ENCODE measurements at regions of chr14 and their contacts with region 1.

Region 1: GRCh38 chr14:102086972-102087761 is at the start of gene HSP90AA1:
- DNase-seq: peak; percentile 88 to 100
- H3K4me3 ChIP-seq: peak within 1 kb of the TSS; percentile 89
- H3K27ac ChIP-seq: peak within 1 kb of the TSS; percentile 82
- H3K4me1 ChIP-seq: peaks cover 41% of the 10 kb centered on the region
- H3K27me3 ChIP-seq: no peaks in the 10 kb centered on the region
- CTCF ChIP-seq: peak; percentile 28; the same call in 1 of the 2 replicates
- total RNA-seq, gene HSP90AA1: 1,314 and 1,931 TPM in 2 replicates

Region 2: GRCh38 chr14:101797856-101798255 is 289.3 kb before region 1 on chr14:
- CTCF ChIA-PET with region 1: interaction called, 11 read pairs
- POLR2A ChIA-PET with region 1: no interaction called
- intact Hi-C with region 1: no loop called
- DNase-seq: no peak
- H3K4me3 ChIP-seq: no peak overlapping the region
- H3K27ac ChIP-seq: no peak overlapping the region
- H3K4me1 ChIP-seq: no peaks in the 10 kb centered on the region
- H3K27me3 ChIP-seq: no peaks in the 10 kb centered on the region
- CTCF ChIP-seq: no peak

Region 3: DNA sequence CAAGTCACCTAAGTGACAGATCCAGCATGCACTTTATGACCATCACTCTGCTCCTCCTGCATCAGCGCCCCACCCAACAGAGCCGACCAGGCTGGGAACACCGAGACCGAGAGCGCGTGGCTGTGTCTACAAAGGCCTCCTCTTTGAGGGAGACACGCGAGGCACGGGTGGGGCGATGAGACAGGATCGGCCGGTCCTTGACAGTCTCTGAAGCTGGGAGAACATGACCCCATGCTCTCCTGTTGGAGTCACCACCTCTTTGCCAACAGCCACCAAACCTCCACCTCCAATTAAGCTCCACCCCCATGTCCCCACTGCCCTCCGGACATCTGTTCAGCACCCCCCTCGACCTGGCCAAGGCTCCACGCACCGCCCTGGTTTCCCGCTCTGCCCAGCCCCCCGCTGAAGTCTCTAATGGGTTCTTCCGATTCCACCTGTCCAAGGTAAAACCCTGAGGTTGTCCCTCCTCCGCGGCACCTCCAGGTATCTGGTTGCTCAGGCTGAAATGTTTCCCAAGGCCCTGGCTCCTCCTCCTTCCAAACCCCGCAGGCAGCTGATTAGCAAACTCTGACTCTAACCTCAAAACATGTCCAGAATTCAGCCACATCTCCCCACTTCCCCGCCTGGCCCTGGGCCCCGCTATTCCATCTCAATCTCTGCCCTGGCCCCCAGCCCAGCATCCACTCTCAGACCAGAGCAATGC is 31.8 kb before region 1 on chr14:
- CTCF ChIA-PET with region 1: no interaction called
- POLR2A ChIA-PET with region 1: interaction called, 6 read pairs
- intact Hi-C with region 1: loop called (anchors 2 kb)
- DNase-seq: peak; percentile 92 to 98
- H3K4me3 ChIP-seq: peak overlapping the region; percentile 43
- H3K27ac ChIP-seq: peak overlapping the region; percentile 48
- H3K4me1 ChIP-seq: peaks cover 36% of the 10 kb centered on the region
- H3K27me3 ChIP-seq: no peaks in the 10 kb centered on the region
- CTCF ChIP-seq: no peak

Region 4: DNA sequence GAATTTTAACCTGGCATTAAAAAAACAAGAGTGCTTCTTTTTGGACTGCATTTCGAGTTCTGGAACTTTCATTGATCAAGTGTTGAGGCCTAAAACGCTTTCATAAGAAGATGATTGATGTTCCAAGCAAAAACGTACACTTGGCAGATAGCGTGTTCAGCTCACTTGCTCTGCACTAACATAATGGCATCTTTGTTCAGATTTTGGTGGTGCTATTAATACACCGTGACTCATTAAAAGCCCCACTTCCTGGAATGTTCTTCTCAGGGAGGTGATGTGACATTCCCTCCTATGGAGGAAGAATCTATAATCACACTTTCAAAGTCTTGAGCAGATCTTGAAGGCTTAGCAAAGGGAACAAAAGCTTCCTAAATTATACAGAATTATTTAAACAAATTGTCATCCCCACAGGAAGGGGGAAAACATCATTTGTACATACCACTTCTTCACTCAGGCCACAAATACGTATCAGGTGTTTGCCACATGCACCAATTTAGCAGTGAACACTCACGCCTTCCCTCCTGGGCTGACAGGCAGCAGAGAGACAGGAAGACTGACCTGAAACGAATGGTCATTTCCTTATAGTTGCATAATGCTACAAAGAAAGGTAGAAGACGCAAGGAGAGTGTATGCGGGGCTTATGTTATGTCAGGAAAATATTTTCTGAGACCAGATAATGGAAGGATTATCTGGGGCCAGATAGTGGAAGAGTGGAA is 15.7 kb before region 1 on chr14:
- CTCF ChIA-PET with region 1: interaction called, 8 read pairs
- POLR2A ChIA-PET with region 1: interaction called, 26 read pairs
- intact Hi-C with region 1: loop called (anchors 1 kb)
- DNase-seq: peak; percentile 66 to 100
- H3K4me3 ChIP-seq: peak overlapping the region; percentile 7; the same call in 1 of the 2 replicates
- H3K27ac ChIP-seq: peak overlapping the region; percentile 91
- H3K4me1 ChIP-seq: peaks cover 34% of the 10 kb centered on the region
- H3K27me3 ChIP-seq: no peaks in the 10 kb centered on the region
- CTCF ChIP-seq: 0 out of 2 replicates have a peak, but pooled peaks have one; percentile 28

Region 5: DNA sequence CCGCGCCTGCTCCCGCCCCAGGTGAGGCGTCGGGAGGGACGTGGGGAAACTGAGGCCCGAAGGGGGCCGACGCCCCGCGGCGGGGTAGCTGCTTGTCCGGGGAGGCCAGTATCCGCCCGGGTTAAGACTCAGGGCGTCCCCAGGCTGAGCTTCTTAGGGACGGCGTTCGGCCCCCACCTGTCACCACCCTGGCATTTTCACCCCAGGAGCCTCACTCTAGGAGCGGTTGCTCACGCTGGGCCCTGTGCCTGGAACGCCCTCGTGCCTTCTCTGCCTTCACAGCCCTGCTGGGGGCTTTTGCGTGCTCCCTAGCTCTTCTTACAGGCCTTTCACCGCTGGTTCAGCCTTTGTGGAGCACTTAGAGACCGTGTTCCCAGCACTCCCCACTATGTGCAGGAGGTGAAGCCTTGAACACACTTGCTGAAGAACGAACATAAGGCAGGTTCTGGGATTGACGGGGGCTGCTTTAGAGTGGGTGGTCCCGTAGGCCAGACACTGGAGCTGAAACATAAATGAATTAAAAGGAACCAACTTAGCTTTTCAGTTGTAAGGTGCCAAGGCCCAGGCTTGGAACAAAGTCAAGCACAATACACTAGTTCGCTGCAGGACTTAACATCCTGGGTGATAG is 233.0 kb after region 1 on chr14:
- CTCF ChIA-PET with region 1: no interaction called
- POLR2A ChIA-PET with region 1: no interaction called
- intact Hi-C with region 1: no loop called
- DNase-seq: peak; percentile 17 to 46
- H3K4me3 ChIP-seq: peak overlapping the region; percentile 69
- H3K27ac ChIP-seq: peak overlapping the region; percentile 37
- H3K4me1 ChIP-seq: peaks cover 31% of the 10 kb centered on the region
- H3K27me3 ChIP-seq: no peaks in the 10 kb centered on the region
- CTCF ChIP-seq: no peak

Region 6: DNA sequence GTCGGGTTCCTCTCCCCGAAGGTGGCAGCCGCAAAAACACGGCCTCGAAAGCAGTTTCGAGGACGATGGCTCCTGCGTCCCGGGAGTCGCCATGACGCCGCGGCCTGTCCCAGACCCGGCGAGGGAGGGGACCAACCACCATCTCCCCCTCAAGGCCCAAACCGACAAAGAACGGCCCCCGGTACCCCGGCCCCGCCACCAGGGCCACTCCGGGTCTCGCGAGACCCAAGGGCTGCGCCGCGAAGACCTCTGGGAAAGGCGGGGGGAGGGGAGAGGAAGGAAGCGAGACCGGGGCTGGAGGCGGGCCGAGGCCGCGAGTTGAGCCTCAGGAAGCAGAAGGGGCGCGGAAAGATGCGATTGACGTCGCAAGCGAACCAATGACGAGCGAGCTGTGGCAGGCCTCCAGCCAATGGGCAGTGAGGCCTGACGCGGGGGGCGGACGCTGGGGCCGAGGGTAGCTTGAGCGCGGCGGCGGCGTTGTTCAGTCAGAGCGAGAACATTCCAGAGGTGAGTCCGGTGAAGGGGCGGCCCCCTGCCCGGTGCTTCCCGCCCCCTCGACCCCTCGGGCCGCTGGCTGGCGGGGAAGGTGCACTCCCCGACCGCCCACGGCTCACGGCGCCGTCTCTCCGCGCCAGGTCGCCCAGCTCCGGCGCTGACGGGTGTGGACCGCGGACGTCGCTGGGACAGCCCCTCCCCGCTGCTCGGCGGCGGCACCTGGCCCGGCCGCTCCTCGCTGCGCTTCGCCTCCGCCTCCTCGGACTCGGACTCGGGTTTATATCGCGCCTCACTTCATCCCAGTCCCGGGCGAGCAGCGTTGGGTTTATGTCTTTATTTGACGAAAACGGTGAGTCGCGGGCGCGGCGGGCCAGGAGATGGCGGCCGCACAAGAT is 1246.8 kb after region 1 on chr14 and contains the start of gene EIF5:
- CTCF ChIA-PET with region 1: no interaction called
- POLR2A ChIA-PET with region 1: no interaction called
- intact Hi-C with region 1: loop called (anchors 10 kb)
- DNase-seq: peak; percentile 98 to 100
- H3K4me3 ChIP-seq: peak within 1 kb of the TSS; percentile 88
- H3K27ac ChIP-seq: peak within 1 kb of the TSS; percentile 94
- H3K4me1 ChIP-seq: peaks cover 42% of the 10 kb centered on the region
- H3K27me3 ChIP-seq: no peaks in the 10 kb centered on the region
- CTCF ChIP-seq: no peak
- total RNA-seq, gene EIF5: 310 and 330 TPM in 2 replicates